Heart right ventricle (tissue), 16 donors: ENCODE measurements at regions of chr5 and their contacts with region 1.

Region 1: GRCh38 chr5:88140856-88141752 is 127.5 kb downstream of the TMEM161B start:
- DNase-seq: peak; percentile 93 to 95
- ATAC-seq: peak; percentile 97 to 100 (median 98)
- H3K4me3 ChIP-seq: peak overlapping the region; percentile 9 to 62 (median 56)
- H3K27ac ChIP-seq: peak overlapping the region in 3 of 10 donors; percentile 8 to 47 (median 38)
- H3K4me1 ChIP-seq: peaks cover 6 to 53% (median 37%) of the 10 kb centered on the region in 9 donors
- H3K27me3 ChIP-seq: peaks cover 0 to 88% (median 67%) of the 10 kb centered on the region in 7 donors
- CTCF ChIP-seq: peak; percentile 48 to 87 (median 72)

Region 2: GRCh38 chr5:87780831-87781760 is 360.0 kb before region 1 on chr5:
- intact Hi-C with region 1: loop called in 4 of 10 experiments (anchors 5 to 10 kb)
- DNase-seq: peak; percentile 66 to 84
- ATAC-seq: peak; percentile 88 to 98 (median 95)
- H3K4me3 ChIP-seq: no peak overlapping the region
- H3K27ac ChIP-seq: no peak overlapping the region
- H3K4me1 ChIP-seq: no peaks in the 10 kb centered on the region
- H3K27me3 ChIP-seq: peaks cover 0 to 96% (median 82%) of the 10 kb centered on the region in 7 donors
- CTCF ChIP-seq: peak; percentile 82 to 97 (median 94)

Region 3: GRCh38 chr5:87899721-87900131 is 241.4 kb before region 1 on chr5:
- intact Hi-C with region 1: loop called in 1 of 10 experiments (anchors 2 kb)
- DNase-seq: peak; percentile 16 to 63
- ATAC-seq: peak; percentile 83 to 97 (median 94)
- H3K4me3 ChIP-seq: no peak overlapping the region
- H3K27ac ChIP-seq: peak overlapping the region in 8 of 10 donors; percentile 2 to 60 (median 28)
- H3K4me1 ChIP-seq: peaks cover 0 to 30% (median 5%) of the 10 kb centered on the region in 9 donors
- H3K27me3 ChIP-seq: no peaks in the 10 kb centered on the region
- CTCF ChIP-seq: no peak

Region 4: GRCh38 chr5:88419931-88420330 is 278.8 kb after region 1 on chr5:
- intact Hi-C with region 1: no loop called
- DNase-seq: no peak
- ATAC-seq: no peak
- H3K4me3 ChIP-seq: no peak overlapping the region
- H3K27ac ChIP-seq: no peak overlapping the region
- H3K4me1 ChIP-seq: no peaks in the 10 kb centered on the region
- H3K27me3 ChIP-seq: no peaks in the 10 kb centered on the region
- CTCF ChIP-seq: no peak

Region 5: GRCh38 chr5:88674356-88675167 is 533.5 kb after region 1 on chr5:
- intact Hi-C with region 1: loop called in 3 of 10 experiments (anchors 5 kb)
- DNase-seq: no peak
- ATAC-seq: peak; percentile 23 to 59 (median 47)
- H3K4me3 ChIP-seq: peak overlapping the region; percentile 18 to 59 (median 46)
- H3K27ac ChIP-seq: no peak overlapping the region
- H3K4me1 ChIP-seq: peaks cover 0 to 27% (median 20%) of the 10 kb centered on the region in 9 donors
- H3K27me3 ChIP-seq: peaks cover 55 to 100% (median 99%) of the 10 kb centered on the region in 7 donors
- CTCF ChIP-seq: no peak

Region 6: DNA sequence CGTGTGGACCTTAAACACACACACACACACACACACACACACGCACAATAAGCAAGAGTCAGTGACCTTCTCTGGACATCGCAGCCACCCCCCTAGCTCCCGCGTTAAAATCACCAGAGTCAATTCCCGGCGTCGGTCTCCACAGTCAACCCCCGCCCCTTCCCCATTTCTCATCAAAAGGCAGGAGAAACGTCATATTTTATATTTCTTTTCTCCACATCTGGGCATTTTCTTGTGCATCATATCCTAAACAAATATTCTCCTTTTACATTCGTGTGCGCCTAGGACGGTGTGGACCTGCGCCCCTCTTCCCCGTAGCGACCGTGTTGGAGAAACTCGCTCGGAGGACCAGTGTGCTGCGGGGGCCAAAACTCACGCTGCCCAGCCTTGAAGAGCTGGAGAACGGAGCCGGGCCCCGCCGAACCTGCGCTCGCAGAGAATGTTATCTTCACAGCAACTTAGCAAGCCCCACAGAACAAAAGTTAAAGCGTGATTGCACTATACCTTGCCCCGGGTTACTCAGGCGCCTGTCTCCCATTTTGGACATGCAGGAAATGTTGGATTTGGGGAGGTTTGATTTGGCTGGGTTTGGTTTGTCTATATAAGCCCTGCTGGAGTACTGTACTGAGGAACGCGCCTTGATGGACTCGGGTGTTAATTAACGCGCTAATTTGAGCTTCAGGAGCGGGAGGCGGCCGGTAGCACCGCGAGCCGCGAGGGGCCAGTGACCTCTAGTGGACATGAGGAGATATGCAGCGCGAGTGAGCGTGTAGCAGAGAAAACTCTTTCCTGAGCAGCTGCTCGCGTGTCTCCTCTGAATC is 549.5 kb after region 1 on chr5:
- intact Hi-C with region 1: loop called in 4 of 10 experiments (anchors 5 kb)
- DNase-seq: peak; percentile 63 to 68
- ATAC-seq: peak; percentile 73 to 93 (median 90)
- H3K4me3 ChIP-seq: peak overlapping the region in 8 of 10 donors; percentile 15 to 39 (median 30)
- H3K27ac ChIP-seq: no peak overlapping the region
- H3K4me1 ChIP-seq: peaks cover 0 to 47% (median 35%) of the 10 kb centered on the region in 9 donors
- H3K27me3 ChIP-seq: peaks cover 31 to 100% (median 100%) of the 10 kb centered on the region in 7 donors
- CTCF ChIP-seq: peak; percentile 94 to 98 (median 96)